ENCODE measurements at regions of chr7 and their contacts with region 1.

Region 1: DNA sequence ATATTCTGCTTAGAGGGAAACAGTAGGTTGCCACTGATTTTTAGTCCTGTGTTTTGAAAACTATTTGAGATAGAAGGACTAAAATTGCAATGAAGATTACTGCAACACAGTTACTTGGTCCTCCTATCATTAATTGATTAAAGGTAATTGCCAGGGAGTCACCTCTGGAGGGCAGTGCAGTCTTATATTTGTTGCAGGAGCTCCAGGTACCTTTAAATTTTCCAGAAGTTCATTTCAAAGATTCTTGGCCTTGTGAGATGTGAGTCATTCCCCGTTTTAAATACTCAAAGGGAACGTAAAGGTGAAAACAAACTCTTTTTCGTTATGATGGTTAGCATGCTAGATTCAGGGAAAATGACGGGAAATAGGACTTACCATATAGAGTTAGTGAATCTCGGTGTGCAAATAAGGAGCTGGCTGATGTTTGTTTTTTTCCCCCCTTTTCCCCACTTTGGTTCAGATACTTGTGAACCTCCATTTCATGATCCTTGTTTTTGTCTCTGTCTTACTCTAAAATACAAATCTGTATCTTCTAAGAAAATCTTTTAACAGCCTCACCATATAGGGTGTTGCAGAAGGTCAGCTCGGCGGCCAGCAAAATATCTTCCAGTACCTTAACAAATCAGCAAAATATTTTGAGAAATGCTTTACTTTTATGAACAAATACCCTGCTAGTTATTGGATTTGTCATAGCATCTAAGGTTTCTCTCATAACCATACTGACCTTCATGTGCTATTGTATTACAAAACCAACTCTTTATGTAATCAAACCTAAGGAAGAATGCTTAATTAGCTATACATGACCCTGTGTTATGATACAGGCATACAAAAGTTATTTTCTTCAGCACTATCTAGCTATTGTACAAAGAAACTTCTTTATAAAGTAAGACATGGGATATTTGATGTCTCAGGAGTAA is 143.0 kb upstream of the HDAC9 start:
- DNase-seq: peak in 1 of 2 donors; percentile 30
- ATAC-seq: peak; percentile 76 to 91 (median 86)
- H3K4me3 ChIP-seq: peak overlapping the region; percentile 24
- H3K27ac ChIP-seq: no peak overlapping the region
- H3K4me1 ChIP-seq: peaks cover 7% of the 10 kb centered on the region
- H3K27me3 ChIP-seq: no peaks in the 10 kb centered on the region
- CTCF ChIP-seq: peak; percentile 75

Region 2: GRCh38 chr7:17849504-17849903 is 503.1 kb before region 1 on chr7:
- intact Hi-C with region 1: no loop called
- DNase-seq: no peak
- ATAC-seq: no peak
- H3K4me3 ChIP-seq: no peak overlapping the region
- H3K27ac ChIP-seq: no peak overlapping the region
- H3K4me1 ChIP-seq: no peaks in the 10 kb centered on the region
- H3K27me3 ChIP-seq: no peaks in the 10 kb centered on the region
- CTCF ChIP-seq: no peak

Region 3: DNA sequence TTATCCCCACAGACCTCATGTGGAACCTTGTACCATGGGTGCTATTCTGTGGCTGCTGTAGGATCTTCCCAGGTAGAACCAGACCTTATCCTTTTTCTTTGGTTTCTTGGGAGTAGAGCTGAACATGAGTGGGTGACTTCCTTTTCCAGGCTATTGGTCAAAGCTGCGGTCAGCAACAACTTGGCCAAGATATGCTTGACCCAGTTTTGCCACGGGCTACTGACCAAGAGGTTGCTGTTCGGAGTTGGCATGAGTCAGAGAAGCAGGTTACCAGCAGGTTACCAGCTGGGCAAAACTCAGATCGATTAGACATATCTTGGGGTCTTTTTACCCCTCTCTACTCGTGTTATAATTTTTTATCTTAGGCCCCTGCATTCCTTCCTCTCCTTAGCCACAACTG is 106.2 kb after region 1 on chr7:
- intact Hi-C with region 1: loop called in 1 of 2 experiments (anchors 10 kb)
- DNase-seq: peak; percentile 40 to 64
- ATAC-seq: peak; percentile 97 to 99 (median 98)
- H3K4me3 ChIP-seq: peak overlapping the region; percentile 43
- H3K27ac ChIP-seq: peak overlapping the region; percentile 71
- H3K4me1 ChIP-seq: peaks cover 20% of the 10 kb centered on the region
- H3K27me3 ChIP-seq: no peaks in the 10 kb centered on the region
- CTCF ChIP-seq: no peak

Region 4: GRCh38 chr7:18495412-18496340 is 143.1 kb after region 1 on chr7 and contains the start of gene HDAC9:
- intact Hi-C with region 1: loop called (anchors 5 kb)
- DNase-seq: peak; percentile 14 to 56
- ATAC-seq: peak; percentile 90 to 94 (median 93)
- H3K4me3 ChIP-seq: peak within 1 kb of the TSS; percentile 69
- H3K27ac ChIP-seq: peak within 1 kb of the TSS; percentile 97
- H3K4me1 ChIP-seq: peaks cover 29% of the 10 kb centered on the region
- H3K27me3 ChIP-seq: no peaks in the 10 kb centered on the region
- CTCF ChIP-seq: no peak
- total RNA-seq, gene HDAC9: 16.8 to 34.2 (median 20.1) TPM

Region 5: GRCh38 chr7:18570890-18571478 is 218.4 kb after region 1 on chr7:
- intact Hi-C with region 1: loop called (anchors 2 to 5 kb)
- DNase-seq: no peak
- ATAC-seq: peak in 2 of 4 donors; percentile 39 to 55
- H3K4me3 ChIP-seq: no peak overlapping the region
- H3K27ac ChIP-seq: no peak overlapping the region
- H3K4me1 ChIP-seq: peaks cover 32% of the 10 kb centered on the region
- H3K27me3 ChIP-seq: no peaks in the 10 kb centered on the region
- CTCF ChIP-seq: peak; percentile 54

Region 6: GRCh38 chr7:18666107-18666728 is 313.6 kb after region 1 on chr7:
- intact Hi-C with region 1: loop called (anchors 2 to 5 kb)
- DNase-seq: peak; percentile 76 to 83
- ATAC-seq: peak; percentile 79 to 97 (median 94)
- H3K4me3 ChIP-seq: no peak overlapping the region
- H3K27ac ChIP-seq: no peak overlapping the region
- H3K4me1 ChIP-seq: no peaks in the 10 kb centered on the region
- H3K27me3 ChIP-seq: no peaks in the 10 kb centered on the region
- CTCF ChIP-seq: peak; percentile 90

Measured in psoas muscle (tissue), 8 donors.